Body of pancreas (tissue), 4 donors: ENCODE measurements at regions of chr11 and their contacts with region 1.

Region 1: DNA sequence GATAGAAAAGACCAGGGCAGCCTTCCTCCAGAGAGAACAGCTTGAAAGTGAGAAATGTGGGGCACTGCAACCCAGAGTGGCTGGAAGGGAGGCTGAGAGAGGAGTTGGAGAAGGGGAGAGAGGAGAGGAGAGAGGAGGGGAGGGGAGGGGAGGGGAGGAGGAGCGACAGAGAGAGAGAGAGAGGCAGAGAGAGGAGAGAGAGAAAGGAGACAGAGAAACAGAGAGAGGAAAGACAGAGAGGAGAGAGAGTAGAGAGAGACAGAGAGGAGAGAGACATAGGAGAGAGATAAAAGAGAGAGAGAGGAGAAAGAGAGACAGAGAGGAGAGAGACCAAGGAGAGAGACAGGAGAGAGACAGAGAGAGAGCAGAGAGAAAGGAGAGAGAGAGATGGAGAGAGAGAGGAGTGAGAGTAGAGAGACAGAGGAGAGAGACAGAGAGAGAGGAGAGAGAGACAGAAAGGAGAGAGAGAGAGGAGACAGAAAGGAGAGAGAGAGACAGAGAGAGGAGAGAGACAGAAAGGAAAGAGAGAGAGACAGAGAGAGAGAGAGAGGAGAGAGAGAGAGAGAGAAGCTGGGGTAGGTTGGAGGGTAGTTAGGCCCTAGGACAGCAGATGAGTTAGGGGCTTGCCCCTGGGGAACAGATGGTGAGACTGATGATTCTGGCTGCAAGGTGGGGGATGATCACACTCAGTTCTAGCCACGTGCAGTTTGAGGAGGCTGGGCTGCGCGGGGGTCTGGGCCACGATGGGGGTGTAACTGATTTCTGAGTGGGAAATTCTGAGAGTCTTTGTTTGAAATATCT is 8.5 kb upstream of the SCYL1 start:
- DNase-seq: no peak
- ATAC-seq: no peak
- H3K4me3 ChIP-seq: no peak overlapping the region
- H3K27ac ChIP-seq: no peak overlapping the region
- H3K4me1 ChIP-seq: no peaks in the 10 kb centered on the region
- H3K27me3 ChIP-seq: no peaks in the 10 kb centered on the region
- CTCF ChIP-seq: no peak
- POLR2A ChIP-seq: no peak

Region 2: DNA sequence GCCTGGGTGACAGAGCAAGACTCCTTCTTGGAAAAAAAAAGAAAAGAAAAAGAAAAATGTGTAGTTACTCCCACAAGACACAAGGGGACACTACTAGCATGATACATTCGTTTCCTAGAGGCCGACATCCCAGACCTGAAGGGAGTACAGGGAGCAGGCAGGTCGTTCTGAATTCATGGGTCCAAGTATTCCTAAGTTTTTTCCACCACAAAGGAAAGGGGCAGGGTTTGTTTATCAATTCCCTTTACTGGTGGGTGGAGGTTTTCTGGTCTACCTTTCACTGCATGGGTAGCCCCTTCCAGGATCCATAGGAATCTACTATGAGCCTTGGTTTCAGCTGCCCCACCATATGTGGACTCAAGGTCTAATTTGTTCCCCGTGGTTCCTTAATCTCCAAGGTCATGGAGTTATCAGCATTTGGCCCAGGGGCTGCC is 150.0 kb before region 1 on chr11:
- intact Hi-C with region 1: loop called (anchors 5 kb)
- DNase-seq: peak; percentile 62 to 81 (median 74)
- ATAC-seq: peak; percentile 80
- H3K4me3 ChIP-seq: no peak overlapping the region
- H3K27ac ChIP-seq: peak overlapping the region; percentile 28 to 78 (median 74)
- H3K4me1 ChIP-seq: peaks cover 50% of the 10 kb centered on the region
- H3K27me3 ChIP-seq: no peaks in the 10 kb centered on the region
- CTCF ChIP-seq: peak; percentile 70 to 99 (median 97)
- POLR2A ChIP-seq: peak in 1 of 3 donors; percentile 16

Region 3: DNA sequence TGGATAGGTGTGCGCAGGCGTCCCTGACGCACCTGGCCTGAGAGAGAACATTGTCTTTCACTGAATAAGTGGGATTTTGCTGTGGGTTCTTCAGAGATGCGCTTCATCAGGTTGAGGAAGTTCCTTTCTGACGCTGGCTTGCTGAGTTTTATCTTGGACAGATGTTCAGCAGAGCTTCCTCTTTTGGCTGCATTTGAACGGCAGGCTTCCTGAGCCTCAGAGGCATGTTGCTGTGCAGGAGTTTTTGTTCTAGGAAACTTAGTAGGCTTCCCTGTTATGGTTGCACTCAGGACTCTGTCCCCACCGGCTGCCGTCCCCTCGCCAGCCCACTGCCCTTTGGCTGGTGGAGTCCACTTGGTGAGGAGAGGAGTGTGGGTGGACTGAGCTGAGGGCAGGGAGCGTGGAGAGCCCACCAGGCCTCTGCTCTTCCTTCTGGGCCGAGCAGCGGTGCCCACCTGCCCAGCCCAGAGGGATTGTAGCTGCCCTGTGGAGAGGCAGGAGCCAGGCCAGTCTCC is 112.7 kb before region 1 on chr11:
- intact Hi-C with region 1: no loop called
- DNase-seq: peak in 1 of 4 donors; percentile 52
- ATAC-seq: peak; percentile 16
- H3K4me3 ChIP-seq: no peak overlapping the region
- H3K27ac ChIP-seq: peak overlapping the region in 2 of 4 donors; percentile 8 to 38
- H3K4me1 ChIP-seq: no peaks in the 10 kb centered on the region
- H3K27me3 ChIP-seq: no peaks in the 10 kb centered on the region
- CTCF ChIP-seq: no peak
- POLR2A ChIP-seq: peak in 1 of 3 donors; percentile 7

Region 4: GRCh38 chr11:65418711-65419459 is 97.5 kb before region 1 on chr11:
- intact Hi-C with region 1: loop called (anchors 10 kb)
- DNase-seq: peak; percentile 95 to 98 (median 98)
- ATAC-seq: peak; percentile 47
- H3K4me3 ChIP-seq: no peak overlapping the region
- H3K27ac ChIP-seq: peak overlapping the region; percentile 98 to 100 (median 100)
- H3K4me1 ChIP-seq: peaks cover 57% of the 10 kb centered on the region
- H3K27me3 ChIP-seq: no peaks in the 10 kb centered on the region
- CTCF ChIP-seq: no peak
- POLR2A ChIP-seq: no peak